ENCODE measurements at regions of chr16 and their contacts with region 1.

Region 1: GRCh38 chr16:68884861-68885720 is 41.8 kb downstream of the TANGO6 start:
- DNase-seq: no peak
- H3K4me3 ChIP-seq: no peak overlapping the region
- H3K27ac ChIP-seq: peak overlapping the region in 1 of 2 donors; percentile 12
- H3K4me1 ChIP-seq: peaks cover 8% of the 10 kb centered on the region
- H3K27me3 ChIP-seq: no peaks in the 10 kb centered on the region
- CTCF ChIP-seq: no peak
- EP300 ChIP-seq: no peak
- POLR2A ChIP-seq: no peak

Region 2: GRCh38 chr16:68811503-68811902 is 73.6 kb before region 1 on chr16:
- intact Hi-C with region 1: no loop called
- DNase-seq: no peak
- H3K4me3 ChIP-seq: no peak overlapping the region
- H3K27ac ChIP-seq: no peak overlapping the region
- H3K4me1 ChIP-seq: no peaks in the 10 kb centered on the region
- H3K27me3 ChIP-seq: no peaks in the 10 kb centered on the region
- CTCF ChIP-seq: no peak
- EP300 ChIP-seq: no peak
- POLR2A ChIP-seq: no peak

Region 3: GRCh38 chr16:69049146-69049545 is 164.1 kb after region 1 on chr16:
- intact Hi-C with region 1: no loop called
- DNase-seq: no peak
- H3K4me3 ChIP-seq: no peak overlapping the region
- H3K27ac ChIP-seq: no peak overlapping the region
- H3K4me1 ChIP-seq: no peaks in the 10 kb centered on the region
- H3K27me3 ChIP-seq: no peaks in the 10 kb centered on the region
- CTCF ChIP-seq: no peak
- EP300 ChIP-seq: no peak
- POLR2A ChIP-seq: no peak

Region 4: DNA sequence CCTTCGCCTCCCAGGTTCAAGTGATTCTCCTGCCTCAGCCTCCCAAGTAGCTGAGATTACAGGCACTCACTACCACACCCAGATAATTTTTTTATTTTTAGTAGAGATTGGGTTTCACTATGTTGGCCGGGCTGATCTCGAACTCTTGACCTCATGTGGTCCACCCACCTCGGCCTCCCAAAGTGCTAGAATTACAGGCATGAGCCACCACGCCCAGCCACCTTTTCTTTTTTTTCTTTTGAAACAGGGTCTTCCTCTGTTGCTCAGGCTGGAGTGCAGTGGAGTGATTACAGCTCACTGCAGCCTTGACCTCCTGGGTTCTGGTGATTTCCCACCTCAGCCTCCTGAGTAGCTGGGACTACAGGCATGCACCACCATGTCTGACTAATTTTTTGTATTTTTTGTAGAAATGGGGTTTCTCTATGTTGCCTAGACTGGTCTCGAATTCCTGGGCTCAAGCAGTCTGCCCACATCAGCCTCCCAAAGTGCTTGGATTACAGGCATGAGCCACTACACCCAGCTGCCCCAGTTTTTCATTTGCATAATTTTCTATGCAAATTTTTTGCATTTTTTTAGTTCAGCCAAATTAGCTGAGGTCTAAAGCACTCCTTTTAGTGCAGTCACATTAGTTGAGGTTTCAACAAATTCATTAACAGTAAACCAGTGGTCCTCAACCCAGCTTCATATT is 888.3 kb after region 1 on chr16:
- intact Hi-C with region 1: loop called in 1 of 4 experiments (anchors 10 kb)
- DNase-seq: no peak
- H3K4me3 ChIP-seq: no peak overlapping the region
- H3K27ac ChIP-seq: no peak overlapping the region
- H3K4me1 ChIP-seq: peaks cover 3% of the 10 kb centered on the region
- H3K27me3 ChIP-seq: no peaks in the 10 kb centered on the region
- CTCF ChIP-seq: no peak
- EP300 ChIP-seq: no peak
- POLR2A ChIP-seq: no peak